Cardiac septum (tissue), 1 donor: ENCODE measurements at regions of chr20 and their contacts with region 1.

Region 1: GRCh38 chr20:59848182-59848581 is 85.3 kb downstream of the SYCP2 start:
- DNase-seq: no peak

Region 2: GRCh38 chr20:59598625-59599310 is 249.4 kb before region 1 on chr20:
- intact Hi-C with region 1: loop called (anchors 10 kb)
- DNase-seq: no peak

Region 3: GRCh38 chr20:59785986-59786795 is 62.0 kb before region 1 on chr20:
- intact Hi-C with region 1: loop called (anchors 2 kb)
- DNase-seq: peak; percentile 69

Region 4: GRCh38 chr20:59835448-59836395 is 12.5 kb before region 1 on chr20:
- intact Hi-C with region 1: no loop called
- DNase-seq: no peak

Region 5: GRCh38 chr20:60117065-60117464 is 268.9 kb after region 1 on chr20:
- intact Hi-C with region 1: no loop called
- DNase-seq: no peak